Mammary epithelial cell (primary cell): ENCODE measurements at regions of chr3 and their contacts with region 1.

Region 1: GRCh38 chr3:153161138-153161713 is 800 bp upstream of the RAP2B start:
- DNase-seq: peak; percentile 100
- H3K4me3 ChIP-seq: peak overlapping the region; percentile 78 to 85 (median 82)
- H3K27ac ChIP-seq: peak overlapping the region; percentile 99
- H3K4me1 ChIP-seq: peaks cover 17% of the 10 kb centered on the region
- H3K27me3 ChIP-seq: no peaks in the 10 kb centered on the region
- CTCF ChIP-seq: no peak

Region 2: DNA sequence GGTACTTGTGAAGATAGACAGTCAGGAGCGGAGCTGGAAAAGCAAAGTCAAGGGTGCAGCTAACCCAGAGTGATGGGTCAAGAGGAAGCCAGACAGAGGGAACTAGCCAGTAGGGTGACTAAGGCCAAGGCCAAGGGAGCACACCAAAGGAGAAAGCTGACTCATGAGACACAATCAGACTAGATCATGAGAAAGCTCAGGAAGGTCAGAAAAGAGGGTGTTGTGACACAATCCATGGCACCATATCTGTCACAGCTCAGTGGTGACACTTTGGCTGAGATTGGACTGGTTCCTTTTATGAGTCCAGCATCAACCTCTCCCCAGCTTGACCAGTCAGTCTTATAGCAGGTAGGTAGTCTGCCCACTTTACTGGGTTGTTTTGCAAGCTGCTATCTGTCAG is 304.1 kb before region 1 on chr3:
- CTCF ChIA-PET with region 1: no interaction called
- dilution Hi-C with region 1: no loop called
- in situ Hi-C with region 1: no loop called
- intact Hi-C with region 1: no loop called
- DNase-seq: no peak
- H3K4me3 ChIP-seq: no peak overlapping the region
- H3K27ac ChIP-seq: no peak overlapping the region
- H3K4me1 ChIP-seq: no peaks in the 10 kb centered on the region
- H3K27me3 ChIP-seq: no peaks in the 10 kb centered on the region
- CTCF ChIP-seq: no peak

Region 3: DNA sequence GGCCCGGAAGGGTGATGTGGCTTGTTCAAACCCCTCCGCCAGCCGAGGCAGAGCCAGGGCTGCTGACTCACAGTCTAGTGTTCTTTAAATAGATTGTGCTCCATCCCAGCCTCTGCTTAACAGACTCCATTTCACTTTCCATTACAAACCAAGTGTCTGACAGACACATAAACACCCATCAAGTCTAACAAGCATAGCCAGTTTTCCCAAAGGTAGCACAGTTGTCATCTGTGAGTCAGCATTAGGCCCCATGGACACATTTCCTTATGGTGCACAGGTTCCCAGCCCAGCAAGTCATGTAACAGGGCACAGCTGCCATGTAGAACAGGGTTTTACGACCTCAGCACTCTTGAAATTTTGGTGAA is 109.1 kb before region 1 on chr3:
- CTCF ChIA-PET with region 1: no interaction called
- dilution Hi-C with region 1: loop called (anchors 5 kb)
- in situ Hi-C with region 1: loop called (anchors 10 kb)
- intact Hi-C with region 1: loop called (anchors 1 kb)
- DNase-seq: peak; percentile 98
- H3K4me3 ChIP-seq: no peak overlapping the region
- H3K27ac ChIP-seq: peak overlapping the region; percentile 96
- H3K4me1 ChIP-seq: peaks cover 21% of the 10 kb centered on the region
- H3K27me3 ChIP-seq: no peaks in the 10 kb centered on the region
- CTCF ChIP-seq: no peak

Region 4: GRCh38 chr3:153144779-153145178 is 16.4 kb before region 1 on chr3:
- CTCF ChIA-PET with region 1: no interaction called
- dilution Hi-C with region 1: no loop called
- in situ Hi-C with region 1: no loop called
- intact Hi-C with region 1: loop called (anchors 1 kb)
- DNase-seq: peak; percentile 50
- H3K4me3 ChIP-seq: no peak overlapping the region
- H3K27ac ChIP-seq: peak overlapping the region; percentile 59
- H3K4me1 ChIP-seq: peaks cover 42% of the 10 kb centered on the region
- H3K27me3 ChIP-seq: no peaks in the 10 kb centered on the region
- CTCF ChIP-seq: no peak

Region 5: DNA sequence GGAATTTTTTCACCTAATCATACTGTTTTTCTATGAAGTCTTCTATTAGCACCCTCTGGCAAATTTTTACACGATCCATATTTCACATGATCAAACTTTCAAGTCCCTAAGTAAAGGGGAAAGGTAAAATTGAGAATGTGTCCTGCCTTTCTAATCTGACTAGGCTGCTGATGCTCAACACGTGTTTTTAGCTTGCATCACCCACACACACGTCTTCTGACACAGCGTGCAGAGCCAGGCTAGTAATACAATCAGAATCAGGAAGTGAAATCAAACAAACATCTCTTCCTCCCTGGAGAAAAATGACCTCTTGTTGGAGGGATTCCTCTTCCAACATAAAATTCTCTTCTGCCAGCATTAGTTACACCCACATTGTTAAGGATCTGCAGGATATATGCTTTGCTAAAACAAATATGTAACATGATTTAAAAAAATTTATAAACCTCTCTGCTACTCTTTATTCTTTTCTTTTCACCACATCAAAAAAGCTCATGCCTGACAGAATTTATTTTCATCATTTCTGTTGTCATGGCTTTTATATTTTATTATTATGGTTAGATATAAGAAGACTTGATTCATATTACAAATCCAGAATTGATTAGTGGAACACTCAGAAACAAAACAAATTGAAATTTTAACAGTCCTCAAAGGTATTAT is 123.2 kb after region 1 on chr3:
- CTCF ChIA-PET with region 1: interaction called, 13 read pairs
- dilution Hi-C with region 1: no loop called
- in situ Hi-C with region 1: loop called (anchors 5 to 10 kb)
- intact Hi-C with region 1: loop called (anchors 1 kb)
- DNase-seq: peak; percentile 81
- H3K4me3 ChIP-seq: no peak overlapping the region
- H3K27ac ChIP-seq: peak overlapping the region; percentile 97
- H3K4me1 ChIP-seq: peaks cover 42% of the 10 kb centered on the region
- H3K27me3 ChIP-seq: no peaks in the 10 kb centered on the region
- CTCF ChIP-seq: no peak

Region 6: DNA sequence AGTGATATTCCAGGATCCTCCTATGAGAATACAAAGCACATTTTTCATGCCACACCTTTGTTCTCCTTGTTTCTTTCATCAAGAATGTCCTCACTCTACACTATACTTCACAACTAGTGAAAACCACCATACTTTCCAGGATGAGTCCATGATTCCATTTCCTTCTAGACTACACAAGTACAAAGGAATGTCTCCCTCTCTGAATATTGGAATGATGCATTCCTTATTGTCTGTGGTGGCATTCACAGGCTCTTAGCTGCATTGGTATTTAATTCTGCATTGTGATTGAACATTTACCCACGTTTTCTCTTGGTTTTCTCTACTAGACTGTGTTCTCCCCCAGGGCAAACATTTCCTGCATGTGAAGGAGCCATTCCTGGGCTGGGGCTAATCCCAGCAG is 218.3 kb after region 1 on chr3:
- CTCF ChIA-PET with region 1: no interaction called
- dilution Hi-C with region 1: no loop called
- in situ Hi-C with region 1: no loop called
- intact Hi-C with region 1: no loop called
- DNase-seq: no peak
- H3K4me3 ChIP-seq: no peak overlapping the region
- H3K27ac ChIP-seq: no peak overlapping the region
- H3K4me1 ChIP-seq: no peaks in the 10 kb centered on the region
- H3K27me3 ChIP-seq: no peaks in the 10 kb centered on the region
- CTCF ChIP-seq: no peak

Region 7: GRCh38 chr3:153443961-153444360 is 282.7 kb after region 1 on chr3:
- CTCF ChIA-PET with region 1: no interaction called
- dilution Hi-C with region 1: no loop called
- in situ Hi-C with region 1: no loop called
- intact Hi-C with region 1: loop called (anchors 5 kb)
- DNase-seq: no peak
- H3K4me3 ChIP-seq: no peak overlapping the region
- H3K27ac ChIP-seq: no peak overlapping the region
- H3K4me1 ChIP-seq: no peaks in the 10 kb centered on the region
- H3K27me3 ChIP-seq: no peaks in the 10 kb centered on the region
- CTCF ChIP-seq: peak in 1 of 2 donors; percentile 9

Region 8: DNA sequence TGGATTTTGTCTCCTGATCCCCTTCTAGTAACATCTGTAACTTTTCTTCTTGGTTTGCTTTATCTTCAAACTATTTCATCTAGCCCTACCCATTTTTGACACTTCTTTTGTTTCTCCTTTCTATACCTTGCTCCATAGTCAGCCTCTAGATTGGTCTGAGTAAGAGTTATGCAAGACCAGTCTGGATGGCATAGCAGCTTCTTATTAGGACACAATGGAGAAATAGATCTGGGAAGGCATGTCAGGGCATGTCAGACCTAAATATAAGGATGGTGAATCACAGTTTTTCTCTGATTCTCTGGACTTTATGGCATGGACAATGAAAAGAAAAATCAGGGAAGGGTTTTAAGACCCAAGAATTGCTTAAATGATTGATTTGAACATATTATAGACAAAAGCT is 453.3 kb after region 1 on chr3:
- CTCF ChIA-PET with region 1: no interaction called
- dilution Hi-C with region 1: no loop called
- in situ Hi-C with region 1: no loop called
- intact Hi-C with region 1: loop called (anchors 5 kb)
- DNase-seq: peak; percentile 95
- H3K4me3 ChIP-seq: no peak overlapping the region
- H3K27ac ChIP-seq: peak overlapping the region; percentile 66
- H3K4me1 ChIP-seq: peaks cover 13% of the 10 kb centered on the region
- H3K27me3 ChIP-seq: no peaks in the 10 kb centered on the region
- CTCF ChIP-seq: no peak